ENCODE measurements at regions of chr12 and their contacts with region 1.

Region 1: DNA sequence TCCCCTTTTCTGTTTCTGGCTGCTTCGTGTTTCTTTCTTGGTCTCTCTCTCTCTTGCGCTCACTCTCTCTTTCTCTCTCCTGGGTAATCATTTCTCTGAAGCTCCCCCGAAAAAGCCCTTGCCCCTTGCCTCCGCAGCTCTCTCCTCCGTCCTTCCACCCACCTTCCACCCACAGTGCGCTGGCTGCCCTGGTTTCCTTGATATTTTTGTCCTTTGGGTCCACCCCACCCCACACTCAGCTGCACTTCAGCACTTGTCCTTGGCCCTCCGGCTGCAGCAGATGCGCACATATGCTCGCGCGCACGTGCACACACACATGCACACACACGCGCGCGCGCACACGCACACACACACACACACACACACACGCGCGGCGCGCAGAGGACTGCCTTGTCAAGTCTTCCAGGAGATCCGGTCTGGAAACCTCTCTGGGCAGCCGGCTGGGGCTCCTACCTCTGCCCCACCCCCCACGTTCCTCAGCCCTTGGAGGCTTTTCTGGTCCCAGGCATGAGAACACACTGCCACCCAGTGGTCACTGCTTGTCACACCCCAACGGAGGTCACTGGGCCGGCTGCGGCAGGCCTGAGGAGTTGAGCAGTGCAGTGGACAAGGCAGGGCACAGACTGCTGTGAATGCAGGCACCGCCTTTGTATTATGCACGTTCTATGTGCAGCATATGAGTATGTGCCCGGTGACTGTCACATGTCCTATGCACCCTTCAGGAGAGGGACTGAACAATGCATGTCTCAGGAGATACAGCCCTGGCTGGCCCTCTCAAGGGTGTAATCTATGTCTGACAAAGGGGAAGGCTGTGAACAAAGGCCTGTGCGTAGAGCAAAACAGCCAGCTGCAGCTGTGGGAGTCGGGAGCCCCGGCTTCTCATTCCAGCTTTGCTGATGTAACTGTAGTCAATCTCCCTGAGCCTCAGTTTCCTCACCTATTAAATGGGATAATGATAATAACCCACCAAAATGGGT is 6.5 kb downstream of the LAG3 start:
- DNase-seq: peak; percentile 85
- ATAC-seq: peak; percentile 89
- H3K4me3 ChIP-seq: peak overlapping the region; percentile 1 to 47 (median 35); a peak in 4 of 6 replicates
- H3K27ac ChIP-seq: peak overlapping the region; percentile 16
- H3K4me1 ChIP-seq: peaks cover 83% of the 10 kb centered on the region
- H3K27me3 ChIP-seq: peaks cover 2 to 16% of the 10 kb centered on the region in 2 experiments; a peak in 2 of 5 replicates
- CTCF ChIP-seq: peak; percentile 100
- EP300 ChIP-seq: peak in 1 of 2 experiments; percentile 41; a peak in 2 of 4 replicates
- POLR2A ChIP-seq: 0 out of 4 replicates have a peak, but pooled peaks of 1 of the 2 experiments have one; percentile 33
- RAD21 ChIP-seq: peak; percentile 99

Region 2: GRCh38 chr12:5996459-5996858 is 782.4 kb before region 1 on chr12:
- CTCF ChIA-PET with region 1: no interaction called
- POLR2A ChIA-PET with region 1: no interaction called
- in situ Hi-C with region 1: no loop called
- intact Hi-C with region 1: no loop called
- DNase-seq: no peak
- ATAC-seq: no peak
- H3K4me3 ChIP-seq: no peak overlapping the region
- H3K27ac ChIP-seq: no peak overlapping the region
- H3K4me1 ChIP-seq: no peaks in the 10 kb centered on the region
- H3K27me3 ChIP-seq: no peaks in the 10 kb centered on the region; a peak in 1 of 5 replicates
- CTCF ChIP-seq: no peak
- EP300 ChIP-seq: no peak
- POLR2A ChIP-seq: no peak
- RAD21 ChIP-seq: no peak

Region 3: GRCh38 chr12:6735448-6736191 is 43.2 kb before region 1 on chr12:
- CTCF ChIA-PET with region 1: interaction called, 16 read pairs
- POLR2A ChIA-PET with region 1: no interaction called
- in situ Hi-C with region 1: no loop called
- intact Hi-C with region 1: loop called (anchors 1 kb)
- DNase-seq: peak; percentile 46
- ATAC-seq: peak; percentile 99
- H3K4me3 ChIP-seq: no peak overlapping the region
- H3K27ac ChIP-seq: peak overlapping the region; percentile 3
- H3K4me1 ChIP-seq: peaks cover 11% of the 10 kb centered on the region
- H3K27me3 ChIP-seq: no peaks in the 10 kb centered on the region
- CTCF ChIP-seq: peak; percentile 84
- EP300 ChIP-seq: no peak
- POLR2A ChIP-seq: no peak
- RAD21 ChIP-seq: peak; percentile 78

Region 4: GRCh38 chr12:6745741-6746525 is 32.9 kb before region 1 on chr12:
- CTCF ChIA-PET with region 1: no interaction called
- POLR2A ChIA-PET with region 1: no interaction called
- in situ Hi-C with region 1: loop called (anchors 5 kb)
- intact Hi-C with region 1: no loop called
- DNase-seq: no peak
- ATAC-seq: no peak; the same call in 1 of the 3 replicates
- H3K4me3 ChIP-seq: no peak overlapping the region
- H3K27ac ChIP-seq: no peak overlapping the region
- H3K4me1 ChIP-seq: peaks cover 1% of the 10 kb centered on the region
- H3K27me3 ChIP-seq: no peaks in the 10 kb centered on the region
- CTCF ChIP-seq: no peak
- EP300 ChIP-seq: no peak
- POLR2A ChIP-seq: no peak; a peak in 1 of 4 replicates
- RAD21 ChIP-seq: no peak

Region 5: DNA sequence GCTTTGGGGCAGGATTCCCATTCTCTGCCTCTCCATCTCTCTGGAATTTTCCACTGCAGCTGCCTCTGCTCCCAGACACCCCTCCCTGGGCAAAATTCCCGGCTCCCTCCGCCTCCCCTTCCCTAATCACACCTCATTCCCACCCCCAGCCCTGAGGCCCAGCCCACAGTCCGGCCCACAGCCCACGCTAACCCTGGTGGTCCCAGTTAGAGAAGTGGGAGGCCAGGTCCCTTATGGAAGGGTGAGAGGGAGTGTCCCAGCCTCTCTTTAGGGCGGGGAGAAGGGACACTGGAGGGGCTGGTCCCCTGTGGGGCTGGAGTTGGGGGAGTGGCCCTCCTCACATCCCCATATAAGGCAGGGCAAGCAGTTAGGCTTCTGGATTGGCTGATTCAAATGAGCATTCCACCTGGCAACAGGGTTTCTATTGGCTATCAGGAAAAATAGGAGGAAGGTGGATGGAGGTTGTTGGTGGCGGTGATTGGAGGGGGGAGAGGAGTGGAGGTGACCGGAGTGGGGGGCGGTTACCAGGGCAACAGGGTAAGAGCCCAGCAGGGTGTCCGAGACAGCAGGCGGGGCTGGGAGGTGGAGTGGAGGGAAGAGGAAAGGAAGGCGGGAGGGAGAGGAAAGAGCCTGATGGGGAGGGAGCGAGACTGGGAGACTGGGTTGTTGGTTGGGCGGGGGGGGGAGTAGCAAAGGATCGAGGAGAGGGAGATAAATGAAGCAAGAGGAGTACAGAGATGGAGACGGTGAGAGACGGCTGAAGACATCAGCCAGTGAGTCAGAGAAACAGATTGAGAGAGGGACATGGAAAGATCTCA is 14.6 kb before region 1 on chr12:
- CTCF ChIA-PET with region 1: interaction called, 4 read pairs
- POLR2A ChIA-PET with region 1: interaction called, 59 read pairs
- in situ Hi-C with region 1: no loop called
- intact Hi-C with region 1: no loop called
- DNase-seq: peak; percentile 95
- ATAC-seq: peak; percentile 82
- H3K4me3 ChIP-seq: peak overlapping the region; percentile 41 to 72 (median 51)
- H3K27ac ChIP-seq: peak overlapping the region; percentile 54
- H3K4me1 ChIP-seq: peaks cover 77% of the 10 kb centered on the region
- H3K27me3 ChIP-seq: no peaks in the 10 kb centered on the region
- CTCF ChIP-seq: no peak
- EP300 ChIP-seq: peak in 1 of 2 experiments; percentile 82; a peak in 2 of 4 replicates
- POLR2A ChIP-seq: no peak
- RAD21 ChIP-seq: no peak

Region 6: GRCh38 chr12:6792522-6793201 is 13.8 kb after region 1 on chr12:
- CTCF ChIA-PET with region 1: no interaction called
- POLR2A ChIA-PET with region 1: interaction called, 11 read pairs
- in situ Hi-C with region 1: no loop called
- intact Hi-C with region 1: no loop called
- DNase-seq: peak; percentile 87
- ATAC-seq: peak; percentile 97
- H3K4me3 ChIP-seq: peak overlapping the region in 2 of 3 experiments; percentile 27 to 58; a peak in 4 of 6 replicates
- H3K27ac ChIP-seq: peak overlapping the region; percentile 74
- H3K4me1 ChIP-seq: peaks cover 59% of the 10 kb centered on the region
- H3K27me3 ChIP-seq: no peaks in the 10 kb centered on the region; a peak in 1 of 5 replicates
- CTCF ChIP-seq: peak; percentile 31; the same call in 1 of the 2 replicates
- EP300 ChIP-seq: peak in 1 of 2 experiments; percentile 78; a peak in 2 of 4 replicates
- POLR2A ChIP-seq: peak in 1 of 2 experiments; percentile 59; a peak in 2 of 4 replicates
- RAD21 ChIP-seq: no peak

Region 7: GRCh38 chr12:6810758-6811157 is 31.9 kb after region 1 on chr12:
- CTCF ChIA-PET with region 1: no interaction called
- POLR2A ChIA-PET with region 1: no interaction called
- in situ Hi-C with region 1: no loop called
- intact Hi-C with region 1: no loop called
- DNase-seq: no peak
- ATAC-seq: peak; percentile 47; the same call in 2 of the 3 replicates
- H3K4me3 ChIP-seq: no peak overlapping the region
- H3K27ac ChIP-seq: no peak overlapping the region
- H3K4me1 ChIP-seq: peaks cover 8% of the 10 kb centered on the region; the same call in 1 of the 2 replicates
- H3K27me3 ChIP-seq: peaks cover 0 to 5% of the 10 kb centered on the region in 2 experiments; a peak in 1 of 5 replicates
- CTCF ChIP-seq: no peak
- EP300 ChIP-seq: no peak
- POLR2A ChIP-seq: no peak
- RAD21 ChIP-seq: no peak

Region 8: DNA sequence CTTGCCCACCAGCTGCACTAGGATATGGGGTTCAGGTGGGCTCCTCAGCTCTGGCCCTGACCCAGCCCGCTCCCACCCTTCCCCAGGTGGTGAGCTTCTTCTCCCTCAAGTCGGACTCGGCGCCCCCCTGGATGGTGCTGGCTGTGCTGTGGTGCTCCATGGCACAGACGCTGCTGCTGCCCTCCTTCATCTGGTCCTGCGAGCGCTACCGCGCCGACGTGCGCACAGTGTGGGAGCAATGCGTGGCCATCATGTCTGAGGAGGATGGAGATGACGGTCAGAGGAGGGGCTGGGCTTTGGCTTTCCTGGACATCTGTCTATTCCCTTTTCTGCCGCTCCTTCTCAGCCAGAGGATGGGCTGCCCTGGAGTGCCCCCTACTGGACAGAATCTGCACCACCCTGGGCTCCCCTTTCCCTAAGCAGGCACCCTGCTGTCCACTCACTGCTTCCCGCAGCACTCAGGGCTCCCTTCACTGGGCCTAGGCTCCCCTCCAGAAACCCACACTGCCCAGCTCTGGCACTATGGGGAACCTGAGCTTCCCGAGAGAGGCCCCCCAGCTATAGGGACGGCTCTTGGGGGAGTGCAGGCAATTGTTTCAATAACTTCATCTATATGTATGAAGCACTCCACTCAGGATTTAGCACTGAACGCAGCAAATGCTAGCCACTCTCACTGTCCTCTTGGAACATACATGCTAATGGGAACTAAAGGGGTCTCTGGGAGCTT is 46.7 kb after region 1 on chr12:
- CTCF ChIA-PET with region 1: no interaction called
- POLR2A ChIA-PET with region 1: no interaction called
- in situ Hi-C with region 1: no loop called
- intact Hi-C with region 1: loop called (anchors 2 kb)
- DNase-seq: peak; percentile 67
- ATAC-seq: peak; percentile 65
- H3K4me3 ChIP-seq: no peak overlapping the region
- H3K27ac ChIP-seq: no peak overlapping the region
- H3K4me1 ChIP-seq: peaks cover 34% of the 10 kb centered on the region
- H3K27me3 ChIP-seq: peaks cover 2 to 6% of the 10 kb centered on the region in 2 experiments; a peak in 3 of 5 replicates
- CTCF ChIP-seq: peak; percentile 95
- EP300 ChIP-seq: no peak
- POLR2A ChIP-seq: no peak
- RAD21 ChIP-seq: peak; percentile 85

Region 9: DNA sequence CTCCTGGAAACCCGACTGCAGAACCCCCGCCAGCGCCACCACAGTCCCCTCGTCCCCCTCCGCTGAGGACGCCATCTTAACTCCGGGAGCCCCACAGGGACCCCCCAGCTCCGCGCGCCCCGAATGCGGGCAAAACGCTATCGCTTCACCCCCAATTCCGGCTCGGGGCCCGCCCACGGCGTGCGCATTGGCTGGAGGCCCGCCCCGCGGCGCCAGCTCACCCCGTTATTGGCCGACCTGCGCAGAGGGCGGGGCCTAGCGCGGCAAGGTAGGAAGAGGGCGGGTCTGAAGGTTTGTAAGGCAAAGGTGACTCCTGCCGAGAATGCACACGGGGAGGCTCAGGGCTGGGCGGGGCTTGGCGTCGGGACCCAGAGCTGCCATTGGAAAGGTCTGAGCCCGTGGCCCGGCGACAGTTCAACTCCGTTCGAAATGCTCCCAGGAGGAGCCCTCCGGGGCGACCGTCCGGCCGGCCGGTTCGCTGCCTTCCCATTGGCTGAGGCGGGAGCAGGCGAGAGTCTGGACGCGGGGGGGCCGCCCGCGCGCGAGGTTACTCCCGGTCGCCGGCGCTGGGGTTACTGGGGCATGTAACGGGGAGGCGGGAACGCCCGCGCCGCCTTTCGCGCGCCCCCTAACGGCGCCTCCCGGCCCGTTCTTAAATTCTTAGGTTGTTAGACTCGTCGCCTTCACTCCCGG is 239.6 kb after region 1 on chr12 and contains the start of gene LPCAT3:
- CTCF ChIA-PET with region 1: no interaction called
- POLR2A ChIA-PET with region 1: no interaction called
- in situ Hi-C with region 1: no loop called
- intact Hi-C with region 1: no loop called
- DNase-seq: peak; percentile 92
- ATAC-seq: peak; percentile 96
- H3K4me3 ChIP-seq: peak within 1 kb of the TSS; percentile 60 to 97 (median 85)
- H3K27ac ChIP-seq: peak within 1 kb of the TSS; percentile 97
- H3K4me1 ChIP-seq: peaks cover 35% of the 10 kb centered on the region
- H3K27me3 ChIP-seq: no peaks in the 10 kb centered on the region; a peak in 1 of 5 replicates
- CTCF ChIP-seq: peak; percentile 87
- EP300 ChIP-seq: peak in 1 of 2 experiments; percentile 34; a peak in 1 of 4 replicates
- POLR2A ChIP-seq: peak; percentile 71 to 78
- RAD21 ChIP-seq: peak; percentile 92
- total RNA-seq, gene LPCAT3: 22.1 and 44.5 TPM in 2 replicates